Activated CD4-positive, alpha-beta memory T cell treated with anti-CD3 and anti-CD28 coated beads for 36 hours (primary cell): ENCODE measurements at regions of chr1 and their contacts with region 1.

Region 1: DNA sequence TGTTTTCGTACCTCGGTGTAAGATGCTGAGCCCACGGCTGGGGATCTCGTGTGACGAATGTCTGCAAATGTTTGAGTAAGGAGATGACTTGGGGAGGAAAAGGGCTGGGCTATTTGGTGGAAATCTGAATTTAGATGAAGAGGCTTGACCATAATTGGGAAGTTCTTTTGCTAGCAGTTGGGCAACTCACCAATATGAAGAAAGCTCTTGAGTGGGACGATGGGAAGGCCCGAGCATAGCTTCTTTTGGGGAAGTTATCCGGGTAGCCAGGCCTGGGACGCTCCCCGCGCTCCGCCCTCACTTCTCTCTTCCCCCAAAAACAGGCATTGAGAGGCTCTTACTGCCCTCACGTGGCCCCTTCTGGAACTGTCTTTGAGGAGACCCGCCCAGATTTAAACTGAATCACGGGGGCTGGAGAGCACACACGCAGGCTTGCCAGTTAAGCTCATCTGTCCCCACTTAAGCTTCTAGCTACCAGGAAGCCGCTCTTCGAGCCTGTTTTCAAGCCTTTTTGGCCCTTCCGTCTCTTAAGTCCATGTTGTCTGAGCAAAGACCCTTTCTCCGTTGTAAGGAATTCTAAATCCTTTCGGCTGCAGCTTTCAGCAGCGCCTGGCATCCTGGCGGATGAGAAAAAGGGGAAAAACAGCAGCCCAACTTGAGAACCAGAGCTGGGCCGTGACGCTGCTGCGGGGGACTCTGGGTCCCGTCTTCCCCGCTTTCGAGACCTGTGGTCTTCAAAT is 93.1 kb downstream of the NID1 start:
- DNase-seq: peak; percentile 92
- H3K4me3 Mint-ChIP-seq: peak overlapping the region; percentile 53
- H3K27ac Mint-ChIP-seq: peak overlapping the region; percentile 53
- H3K4me1 Mint-ChIP-seq: peaks cover 16% of the 10 kb centered on the region
- H3K27me3 Mint-ChIP-seq: no peaks in the 10 kb centered on the region

Region 2: GRCh38 chr1:235513495-235514366 is 458.0 kb before region 1 on chr1:
- CTCF ChIA-PET with region 1: interaction called, 9 read pairs
- POLR2A ChIA-PET with region 1: no interaction called
- intact Hi-C with region 1: loop called (anchors 1 kb)
- DNase-seq: peak; percentile 24
- H3K4me3 Mint-ChIP-seq: no peak overlapping the region
- H3K27ac Mint-ChIP-seq: no peak overlapping the region
- H3K4me1 Mint-ChIP-seq: no peaks in the 10 kb centered on the region
- H3K27me3 Mint-ChIP-seq: peaks cover 5% of the 10 kb centered on the region

Region 3: DNA sequence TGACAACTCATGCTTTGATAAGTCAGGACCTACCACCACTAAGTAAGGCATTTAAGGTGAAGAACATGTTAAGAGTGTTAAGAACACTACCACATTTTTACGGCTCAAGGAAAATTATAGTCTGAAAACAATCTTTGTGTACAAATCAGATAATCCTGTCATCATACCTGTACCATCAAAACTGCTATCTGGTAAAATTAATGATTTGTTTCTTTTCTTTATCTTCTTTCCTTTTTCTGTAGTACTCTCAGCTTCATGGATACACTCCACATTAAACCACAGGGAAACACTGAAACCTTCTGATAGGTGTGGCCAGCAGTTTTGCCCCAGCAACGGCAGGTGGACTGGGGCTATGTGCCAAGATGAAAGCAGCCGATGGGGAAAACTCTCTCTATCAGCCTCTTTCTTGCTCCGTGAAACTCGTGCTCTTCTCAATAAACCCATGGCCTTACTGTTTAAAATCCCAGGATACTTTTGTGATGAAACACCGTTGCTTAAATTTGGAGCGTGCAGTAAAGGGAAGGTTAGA is 180.1 kb before region 1 on chr1:
- CTCF ChIA-PET with region 1: interaction called, 16 read pairs
- POLR2A ChIA-PET with region 1: no interaction called
- intact Hi-C with region 1: no loop called
- DNase-seq: no peak
- H3K4me3 Mint-ChIP-seq: no peak overlapping the region
- H3K27ac Mint-ChIP-seq: no peak overlapping the region
- H3K4me1 Mint-ChIP-seq: no peaks in the 10 kb centered on the region
- H3K27me3 Mint-ChIP-seq: no peaks in the 10 kb centered on the region

Region 4: DNA sequence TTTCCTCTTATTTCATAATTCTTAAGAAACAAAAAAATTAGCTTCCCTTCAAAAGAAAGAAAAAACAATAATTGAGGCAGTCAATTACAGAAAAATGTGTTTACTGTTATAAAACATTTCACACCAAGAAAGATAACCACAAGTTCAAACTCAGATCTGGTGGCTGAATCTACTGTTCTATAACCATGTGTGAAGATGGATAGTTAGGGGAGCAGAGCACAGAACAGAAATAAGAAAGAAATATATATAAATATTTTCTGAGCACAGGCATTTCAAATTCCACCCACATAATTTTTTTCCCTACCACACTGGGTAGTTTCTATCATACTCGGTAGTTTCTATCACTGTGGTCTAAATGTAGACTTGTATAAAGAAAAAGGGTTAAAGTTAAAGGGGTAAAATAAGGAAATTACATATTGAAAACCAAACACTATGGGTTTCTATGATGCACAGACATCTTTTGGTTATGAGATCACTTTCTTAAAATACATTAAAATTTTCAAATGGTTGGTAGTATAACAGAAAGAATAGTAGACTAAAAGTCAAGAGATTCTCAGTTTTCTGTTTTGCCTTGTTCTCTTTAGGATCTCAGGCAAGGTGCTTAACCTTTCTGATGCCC is 115.8 kb before region 1 on chr1:
- CTCF ChIA-PET with region 1: interaction called, 18 read pairs
- POLR2A ChIA-PET with region 1: no interaction called
- intact Hi-C with region 1: no loop called
- DNase-seq: no peak
- H3K4me3 Mint-ChIP-seq: no peak overlapping the region
- H3K27ac Mint-ChIP-seq: no peak overlapping the region
- H3K4me1 Mint-ChIP-seq: peaks cover 47% of the 10 kb centered on the region
- H3K27me3 Mint-ChIP-seq: no peaks in the 10 kb centered on the region

Region 5: DNA sequence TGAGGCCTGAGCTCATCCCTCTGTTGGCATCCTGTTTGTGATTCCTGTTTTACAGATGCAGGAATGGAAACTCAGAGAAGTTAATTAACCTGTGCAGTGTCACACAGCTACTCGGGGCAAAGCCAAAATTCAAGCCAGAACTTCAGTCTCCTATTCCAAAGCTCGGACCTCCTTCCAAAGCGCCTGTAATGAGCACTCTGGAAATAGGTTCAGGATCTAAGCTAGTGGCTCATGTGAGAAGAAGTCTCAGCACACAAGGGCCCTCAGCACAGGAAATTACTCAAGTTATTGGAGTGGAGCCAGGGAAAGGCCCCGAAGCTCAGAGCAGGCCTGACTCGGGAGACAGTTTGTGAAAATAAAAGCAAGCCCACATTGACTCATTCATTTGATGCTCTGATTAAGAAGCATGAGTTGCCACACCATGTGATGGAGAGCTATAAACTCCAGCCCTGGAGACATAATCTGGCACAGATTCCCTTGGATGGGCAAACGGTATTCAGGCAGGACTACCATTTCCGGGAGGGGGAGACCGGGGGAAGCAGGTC is 54.4 kb before region 1 on chr1:
- CTCF ChIA-PET with region 1: interaction called, 17 read pairs
- POLR2A ChIA-PET with region 1: no interaction called
- intact Hi-C with region 1: no loop called
- DNase-seq: peak; percentile 86
- H3K4me3 Mint-ChIP-seq: no peak overlapping the region
- H3K27ac Mint-ChIP-seq: peak overlapping the region; percentile 66
- H3K4me1 Mint-ChIP-seq: peaks cover 34% of the 10 kb centered on the region
- H3K27me3 Mint-ChIP-seq: no peaks in the 10 kb centered on the region

Region 6: GRCh38 chr1:235999259-235999925 is 27.7 kb after region 1 on chr1:
- CTCF ChIA-PET with region 1: interaction called, 22 read pairs
- POLR2A ChIA-PET with region 1: interaction called, 4 read pairs
- intact Hi-C with region 1: loop called (anchors 2 kb)
- DNase-seq: peak; percentile 83
- H3K4me3 Mint-ChIP-seq: peak overlapping the region; percentile 53
- H3K27ac Mint-ChIP-seq: peak overlapping the region; percentile 89
- H3K4me1 Mint-ChIP-seq: peaks cover 53% of the 10 kb centered on the region
- H3K27me3 Mint-ChIP-seq: no peaks in the 10 kb centered on the region